AG04449 (cell line): ENCODE measurements at regions of chr12 and their contacts with region 1.

Region 1: DNA sequence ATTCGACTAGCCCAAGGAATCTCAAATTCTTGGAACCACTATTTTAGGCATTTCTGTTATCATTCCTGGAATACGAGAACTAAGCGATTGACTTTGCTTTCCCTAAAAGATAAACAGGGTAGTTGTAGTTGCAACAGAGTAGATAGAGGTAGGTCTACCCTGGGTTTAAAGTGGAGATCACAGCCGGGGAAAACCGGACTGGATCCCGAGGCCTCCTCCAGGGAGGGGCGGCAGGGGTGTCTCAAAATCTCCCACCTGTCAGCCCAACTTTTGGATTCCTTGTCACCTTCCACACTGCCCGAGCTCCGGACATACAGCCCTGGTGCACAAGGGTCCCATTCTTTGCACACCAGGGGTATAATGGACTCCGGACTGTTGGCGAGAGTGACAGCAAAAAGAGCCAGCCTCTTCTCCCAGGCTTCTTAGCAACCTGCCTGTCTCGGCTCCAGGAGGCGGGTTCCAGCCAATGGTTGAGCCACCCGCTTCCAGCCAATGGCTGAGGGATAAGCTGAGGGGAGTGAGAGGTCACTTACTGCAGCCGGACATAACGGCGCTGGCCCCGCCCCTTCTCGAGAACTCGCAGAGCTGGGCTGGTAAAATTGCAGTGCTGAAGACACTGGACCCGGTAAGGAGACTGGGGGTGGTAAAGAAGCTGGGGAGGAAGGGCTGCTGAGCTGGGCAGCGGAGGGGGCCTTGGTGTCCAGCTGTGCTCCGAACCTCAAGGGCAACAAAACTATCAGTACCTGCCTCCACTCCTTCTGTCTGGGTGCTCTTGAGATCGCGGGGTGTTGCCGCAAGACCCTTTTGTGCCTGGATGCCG is at the start of gene SUOX:
- DNase-seq: peak; percentile 85
- H3K4me3 ChIP-seq: peak within 1 kb of the TSS; percentile 93
- CTCF ChIP-seq: no peak

Region 2: DNA sequence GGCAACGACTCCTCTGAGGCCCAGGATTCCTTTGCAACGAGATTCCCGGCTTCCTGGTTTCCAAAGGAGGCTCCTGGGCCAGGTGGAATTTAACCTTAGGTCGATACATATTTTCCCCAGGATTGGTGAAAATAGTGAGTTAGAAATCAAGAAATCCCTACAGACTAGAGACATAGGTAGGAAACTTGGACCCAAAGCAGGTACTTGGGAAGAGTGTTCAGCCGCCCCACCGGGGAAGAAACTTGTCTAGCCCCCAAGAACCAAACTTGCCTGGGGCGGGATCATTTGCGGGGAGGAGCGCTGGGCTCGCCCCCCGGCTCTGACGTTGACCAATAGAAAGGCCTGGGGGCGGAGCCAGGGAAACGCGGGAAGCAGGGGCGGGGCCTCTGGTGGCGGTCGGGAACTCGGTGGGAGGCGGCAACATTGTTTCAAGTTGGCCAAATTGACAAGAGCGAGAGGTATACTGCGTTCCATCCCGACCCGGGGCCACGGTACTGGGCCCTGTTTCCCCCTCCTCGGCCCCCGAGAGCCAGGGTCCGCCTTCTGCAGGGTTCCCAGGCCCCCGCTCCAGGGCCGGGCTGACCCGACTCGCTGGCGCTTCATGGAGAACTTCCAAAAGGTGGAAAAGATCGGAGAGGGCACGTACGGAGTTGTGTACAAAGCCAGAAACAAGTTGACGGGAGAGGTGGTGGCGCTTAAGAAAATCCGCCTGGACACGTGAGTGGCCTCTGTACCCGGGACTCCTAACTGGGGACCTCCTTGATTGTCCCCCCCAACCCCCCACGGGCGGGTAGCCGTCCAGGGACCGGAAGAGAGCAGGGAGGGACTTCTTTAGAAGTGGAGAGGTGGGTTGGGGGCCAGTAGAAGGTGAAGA is 30.3 kb before region 1 on chr12 and contains the start of gene CDK2:
- CTCF ChIA-PET with region 1: interaction called, 11 read pairs
- POLR2A ChIA-PET with region 1: no interaction called
- DNase-seq: no peak
- H3K4me3 ChIP-seq: peak within 1 kb of the TSS; percentile 85
- CTCF ChIP-seq: no peak

Region 3: GRCh38 chr12:55982319-55982936 is 14.5 kb before region 1 on chr12:
- CTCF ChIA-PET with region 1: interaction called, 213 read pairs
- POLR2A ChIA-PET with region 1: interaction called, 3 read pairs
- DNase-seq: no peak
- H3K4me3 ChIP-seq: no peak overlapping the region
- CTCF ChIP-seq: no peak

Region 4: GRCh38 chr12:56020423-56021184 is 23.7 kb after region 1 on chr12 and contains the start of gene IKZF4:
- CTCF ChIA-PET with region 1: interaction called, 168 read pairs
- POLR2A ChIA-PET with region 1: no interaction called
- DNase-seq: no peak
- H3K4me3 ChIP-seq: peak within 1 kb of the TSS; percentile 49
- CTCF ChIP-seq: no peak

Region 5: GRCh38 chr12:56041552-56042429 is 44.9 kb after region 1 on chr12 and contains the start of gene RPS26:
- CTCF ChIA-PET with region 1: interaction called, 37 read pairs
- POLR2A ChIA-PET with region 1: no interaction called
- DNase-seq: peak; percentile 96
- H3K4me3 ChIP-seq: peak within 1 kb of the TSS; percentile 95
- CTCF ChIP-seq: peak; percentile 64